Heart right ventricle (tissue), 16 donors: ENCODE measurements at regions of chr5 and their contacts with region 1.

Region 1: GRCh38 chr5:172640822-172641358 is at the start of gene NEURL1B:
- DNase-seq: peak; percentile 81 to 87
- ATAC-seq: peak; percentile 74 to 93 (median 86)
- H3K4me3 ChIP-seq: peak within 1 kb of the TSS; percentile 72 to 99 (median 90)
- H3K27ac ChIP-seq: peak within 1 kb of the TSS; percentile 92 to 99 (median 98)
- H3K4me1 ChIP-seq: peaks cover 1 to 57% (median 35%) of the 10 kb centered on the region in 9 donors
- H3K27me3 ChIP-seq: peaks cover 0 to 30% (median 0%) of the 10 kb centered on the region in 7 donors
- CTCF ChIP-seq: peak in 4 of 9 donors; percentile 18 to 56 (median 48)
- total RNA-seq, gene NEURL1B: 14.4 to 45.8 (median 21.6) TPM

Region 2: GRCh38 chr5:172466062-172466461 is 174.8 kb before region 1 on chr5:
- intact Hi-C with region 1: no loop called
- DNase-seq: no peak
- ATAC-seq: peak in 4 of 8 donors; percentile 18 to 67 (median 42)
- H3K4me3 ChIP-seq: no peak overlapping the region
- H3K27ac ChIP-seq: no peak overlapping the region
- H3K4me1 ChIP-seq: peaks cover 0 to 14% (median 0%) of the 10 kb centered on the region in 9 donors
- H3K27me3 ChIP-seq: no peaks in the 10 kb centered on the region
- CTCF ChIP-seq: no peak

Region 3: DNA sequence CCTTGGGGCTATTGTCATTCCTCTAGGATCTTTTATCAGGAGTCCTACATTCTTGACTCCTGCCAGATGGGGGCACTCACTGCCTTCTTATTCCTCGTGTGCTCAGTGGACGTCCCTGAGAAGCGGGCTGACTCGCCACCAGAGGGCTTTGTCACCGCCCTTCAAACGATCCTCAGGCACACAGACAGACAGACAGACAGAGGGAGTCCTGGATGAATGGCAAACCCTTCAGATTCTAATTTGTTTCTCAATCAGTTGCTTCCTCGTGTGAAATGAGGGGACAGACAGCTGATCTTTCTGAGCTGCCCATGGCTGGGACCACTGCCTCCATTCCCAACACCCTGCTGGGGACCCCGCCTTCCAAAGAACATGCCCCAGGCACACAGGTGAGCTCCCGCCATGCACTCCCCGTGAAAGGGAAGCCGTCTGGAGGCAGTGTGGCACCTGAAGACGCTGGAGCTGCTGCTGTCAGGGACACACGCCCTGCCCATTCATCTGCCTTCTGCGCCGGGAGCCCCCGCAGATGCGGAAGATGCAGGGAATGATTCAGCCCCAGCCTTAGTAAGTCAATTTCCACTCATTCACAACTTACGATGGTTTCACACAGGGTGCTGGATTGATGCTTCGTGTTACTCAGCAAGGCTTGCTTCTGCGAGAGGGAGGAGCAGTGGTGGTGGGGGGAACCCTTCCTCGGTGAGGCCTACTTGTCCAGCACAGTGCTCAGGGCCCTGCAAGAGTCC is 161.7 kb before region 1 on chr5:
- intact Hi-C with region 1: loop called in 6 of 10 experiments (anchors 1 to 10 kb)
- DNase-seq: peak; percentile 83 to 92
- ATAC-seq: peak; percentile 94 to 98 (median 96)
- H3K4me3 ChIP-seq: peak overlapping the region in 5 of 10 donors; percentile 21 to 41 (median 28)
- H3K27ac ChIP-seq: peak overlapping the region; percentile 17 to 87 (median 78)
- H3K4me1 ChIP-seq: peaks cover 5 to 43% (median 15%) of the 10 kb centered on the region in 9 donors
- H3K27me3 ChIP-seq: no peaks in the 10 kb centered on the region
- CTCF ChIP-seq: peak; percentile 81 to 95 (median 86)

Region 4: DNA sequence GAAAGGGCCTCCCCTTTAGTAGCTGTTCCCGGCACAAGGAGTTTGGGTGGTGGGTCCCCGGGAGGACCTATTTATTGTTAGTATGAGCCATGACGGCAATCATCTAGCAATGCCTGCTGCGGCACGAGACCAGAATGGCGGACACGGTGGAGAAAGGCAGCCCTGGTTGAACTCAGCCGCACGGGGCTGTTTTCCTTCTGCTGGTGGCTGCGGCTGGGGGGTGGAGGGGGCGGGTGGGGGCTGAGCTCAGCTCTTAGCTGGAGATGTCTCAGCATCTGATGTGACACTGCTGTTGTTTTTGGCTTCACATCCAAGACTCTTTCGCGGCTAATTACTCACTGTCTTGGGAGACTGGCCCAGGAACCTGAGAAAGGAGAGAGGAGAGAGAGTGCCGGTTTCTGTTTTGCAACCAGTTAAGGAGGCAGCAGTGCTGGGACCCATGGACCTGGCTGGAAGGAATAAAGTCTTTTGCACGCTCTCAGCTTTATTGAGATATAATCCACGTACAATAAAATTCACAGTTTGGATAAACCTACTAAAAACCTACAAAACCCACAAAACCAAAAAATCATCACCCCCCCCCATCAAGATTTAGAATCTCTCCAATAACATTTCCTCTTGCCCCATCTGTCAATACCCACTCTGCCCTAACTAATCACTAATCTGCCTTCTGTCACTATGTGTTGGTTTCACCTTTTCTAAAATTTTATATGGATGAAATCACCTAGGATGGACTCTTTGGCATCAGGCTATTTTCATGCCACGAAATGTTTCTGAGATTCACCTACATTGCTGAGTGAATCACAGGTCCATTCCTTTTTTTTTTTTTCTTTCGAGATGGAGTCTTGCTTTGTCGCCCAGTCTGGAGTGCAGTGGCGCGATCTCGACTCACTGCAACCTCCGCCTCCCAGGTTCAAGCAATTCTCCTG is 81.6 kb before region 1 on chr5:
- intact Hi-C with region 1: loop called in 1 of 10 experiments (anchors 10 kb)
- DNase-seq: peak; percentile 73 to 80
- ATAC-seq: peak; percentile 27 to 75 (median 58)
- H3K4me3 ChIP-seq: peak overlapping the region in 7 of 10 donors; percentile 2 to 43 (median 24)
- H3K27ac ChIP-seq: peak overlapping the region; percentile 13 to 88 (median 80)
- H3K4me1 ChIP-seq: peaks cover 22 to 52% (median 40%) of the 10 kb centered on the region in 9 donors
- H3K27me3 ChIP-seq: no peaks in the 10 kb centered on the region
- CTCF ChIP-seq: no peak

Region 5: DNA sequence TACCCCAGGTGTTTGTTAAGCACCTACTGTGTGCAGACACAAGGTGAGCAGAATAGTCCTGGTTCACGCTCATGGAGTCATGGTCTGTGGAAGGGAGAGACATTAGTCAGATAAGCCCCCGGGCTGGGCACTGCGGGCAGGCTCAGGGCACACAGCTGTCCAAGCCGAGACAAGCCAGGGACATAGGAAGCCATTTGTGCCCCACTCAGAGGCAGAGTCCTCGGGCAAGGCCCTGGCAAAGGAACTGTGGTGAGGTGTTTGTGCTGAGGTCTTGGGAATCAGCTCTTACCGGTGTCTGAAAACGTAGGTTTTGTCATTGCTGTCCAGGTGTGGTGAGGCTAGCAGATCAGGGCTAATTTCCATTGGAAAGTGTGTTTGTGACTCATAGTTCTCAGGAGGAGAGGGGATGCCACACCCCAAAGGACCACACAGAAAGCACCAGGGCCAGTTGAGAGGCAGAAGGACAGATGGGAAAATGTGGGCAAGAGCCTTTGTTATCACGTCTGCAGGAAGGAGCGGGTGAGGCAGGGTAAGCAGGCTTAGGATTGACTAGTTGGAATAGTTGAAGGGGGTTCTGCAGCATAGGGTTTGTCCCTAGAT is 45.9 kb before region 1 on chr5:
- intact Hi-C with region 1: loop called in 2 of 10 experiments (anchors 5 kb)
- DNase-seq: no peak
- ATAC-seq: no peak
- H3K4me3 ChIP-seq: no peak overlapping the region
- H3K27ac ChIP-seq: peak overlapping the region in 2 of 10 donors; percentile 15 to 30
- H3K4me1 ChIP-seq: peaks cover 0 to 27% (median 11%) of the 10 kb centered on the region in 9 donors
- H3K27me3 ChIP-seq: no peaks in the 10 kb centered on the region
- CTCF ChIP-seq: no peak

Region 6: GRCh38 chr5:172603251-172603806 is 37.6 kb before region 1 on chr5:
- intact Hi-C with region 1: loop called in 3 of 10 experiments (anchors 5 kb)
- DNase-seq: peak in 1 of 2 donors; percentile 70
- ATAC-seq: peak; percentile 27 to 68 (median 48)
- H3K4me3 ChIP-seq: peak overlapping the region in 1 of 10 donors; percentile 16
- H3K27ac ChIP-seq: peak overlapping the region; percentile 72 to 96 (median 88)
- H3K4me1 ChIP-seq: peaks cover 7 to 81% (median 37%) of the 10 kb centered on the region in 9 donors
- H3K27me3 ChIP-seq: no peaks in the 10 kb centered on the region
- CTCF ChIP-seq: no peak

Region 7: DNA sequence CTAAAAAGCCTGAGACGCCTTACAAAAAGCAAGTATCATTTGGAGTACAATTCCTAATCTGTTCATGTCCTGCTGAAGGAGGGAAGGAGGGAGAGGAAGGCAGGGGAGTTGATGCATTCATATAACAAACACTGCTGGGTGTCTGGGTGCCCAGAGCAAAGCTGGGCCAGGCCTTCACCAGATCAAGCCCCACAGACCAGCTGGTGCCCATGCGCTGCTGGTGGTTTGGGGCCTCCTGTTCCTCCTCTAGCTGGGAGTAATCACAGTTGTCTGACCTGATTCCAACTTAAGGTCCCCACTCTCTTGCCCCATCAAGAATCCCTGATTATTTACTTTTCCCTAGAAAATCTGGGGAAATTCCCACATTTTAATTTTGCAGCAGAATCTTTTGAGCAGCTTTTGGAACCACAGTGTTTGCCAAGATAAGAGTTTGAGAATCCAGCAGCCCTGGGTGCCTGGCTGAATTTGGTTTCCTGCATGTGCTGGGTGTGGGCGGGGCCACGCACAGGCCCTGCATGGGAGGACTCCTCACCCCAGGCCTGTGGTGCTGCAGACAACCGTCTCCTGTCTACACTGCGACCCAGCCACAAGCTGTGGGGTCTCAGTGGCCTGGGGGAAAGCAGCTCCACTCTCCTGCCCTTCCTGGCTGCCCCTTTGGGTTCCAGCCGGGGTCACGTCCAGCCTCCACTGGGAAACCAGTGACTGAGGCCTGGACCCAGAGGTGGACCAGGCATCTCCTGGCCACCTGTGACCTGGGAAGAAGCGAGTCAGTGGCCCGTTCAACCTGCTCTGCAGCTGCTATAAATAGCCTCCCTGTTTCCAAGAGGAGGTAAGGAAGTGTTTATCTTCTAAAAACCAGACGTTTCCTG is 47.7 kb after region 1 on chr5:
- intact Hi-C with region 1: loop called in 6 of 10 experiments (anchors 2 to 10 kb)
- DNase-seq: peak in 1 of 2 donors; percentile 53
- ATAC-seq: peak; percentile 30 to 58 (median 46)
- H3K4me3 ChIP-seq: no peak overlapping the region
- H3K27ac ChIP-seq: peak overlapping the region; percentile 8 to 92 (median 59)
- H3K4me1 ChIP-seq: peaks cover 23 to 89% (median 74%) of the 10 kb centered on the region in 9 donors
- H3K27me3 ChIP-seq: no peaks in the 10 kb centered on the region
- CTCF ChIP-seq: no peak